ENCODE measurements at regions of chr3 and their contacts with region 1.

Region 1: DNA sequence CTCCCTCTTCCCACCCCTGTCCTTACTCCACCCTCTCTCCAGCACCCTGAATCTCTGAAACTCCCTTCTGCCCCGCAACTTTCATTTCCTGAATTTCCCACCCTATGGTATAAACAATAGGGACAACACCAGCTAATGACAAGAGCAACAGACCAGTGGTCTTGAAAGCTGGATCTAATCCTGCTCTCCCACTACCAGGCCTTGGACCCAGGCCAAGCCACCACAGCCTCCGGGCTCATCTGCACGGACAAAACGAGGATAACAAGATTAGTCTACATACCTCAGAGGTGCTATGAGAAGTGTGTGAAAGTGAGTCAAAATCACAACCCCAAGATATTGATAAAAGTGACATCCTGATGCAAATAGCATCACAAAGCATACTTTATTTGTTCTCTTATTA is 128.6 kb downstream of the ERC2 start:
- DNase-seq: no peak
- H3K4me3 Mint-ChIP-seq: no peak overlapping the region
- H3K27ac Mint-ChIP-seq: no peak overlapping the region
- H3K4me1 Mint-ChIP-seq: no peaks in the 10 kb centered on the region
- H3K27me3 Mint-ChIP-seq: peaks cover 19% of the 10 kb centered on the region

Region 2: GRCh38 chr3:55780913-55781312 is 558.8 kb before region 1 on chr3:
- CTCF ChIA-PET with region 1: no interaction called
- DNase-seq: no peak
- H3K4me3 Mint-ChIP-seq: no peak overlapping the region
- H3K27ac Mint-ChIP-seq: no peak overlapping the region
- H3K4me1 Mint-ChIP-seq: no peaks in the 10 kb centered on the region
- H3K27me3 Mint-ChIP-seq: no peaks in the 10 kb centered on the region

Region 3: GRCh38 chr3:56042326-56042951 is 297.2 kb before region 1 on chr3:
- CTCF ChIA-PET with region 1: no interaction called
- DNase-seq: no peak
- H3K4me3 Mint-ChIP-seq: no peak overlapping the region
- H3K27ac Mint-ChIP-seq: no peak overlapping the region
- H3K4me1 Mint-ChIP-seq: no peaks in the 10 kb centered on the region
- H3K27me3 Mint-ChIP-seq: no peaks in the 10 kb centered on the region

Region 4: GRCh38 chr3:56443372-56443771 is 103.7 kb after region 1 on chr3:
- CTCF ChIA-PET with region 1: interaction called, 11 read pairs
- DNase-seq: no peak
- H3K4me3 Mint-ChIP-seq: no peak overlapping the region
- H3K27ac Mint-ChIP-seq: no peak overlapping the region
- H3K4me1 Mint-ChIP-seq: no peaks in the 10 kb centered on the region
- H3K27me3 Mint-ChIP-seq: no peaks in the 10 kb centered on the region